ENCODE measurements at regions of chr9 and their contacts with region 1.

Region 1: DNA sequence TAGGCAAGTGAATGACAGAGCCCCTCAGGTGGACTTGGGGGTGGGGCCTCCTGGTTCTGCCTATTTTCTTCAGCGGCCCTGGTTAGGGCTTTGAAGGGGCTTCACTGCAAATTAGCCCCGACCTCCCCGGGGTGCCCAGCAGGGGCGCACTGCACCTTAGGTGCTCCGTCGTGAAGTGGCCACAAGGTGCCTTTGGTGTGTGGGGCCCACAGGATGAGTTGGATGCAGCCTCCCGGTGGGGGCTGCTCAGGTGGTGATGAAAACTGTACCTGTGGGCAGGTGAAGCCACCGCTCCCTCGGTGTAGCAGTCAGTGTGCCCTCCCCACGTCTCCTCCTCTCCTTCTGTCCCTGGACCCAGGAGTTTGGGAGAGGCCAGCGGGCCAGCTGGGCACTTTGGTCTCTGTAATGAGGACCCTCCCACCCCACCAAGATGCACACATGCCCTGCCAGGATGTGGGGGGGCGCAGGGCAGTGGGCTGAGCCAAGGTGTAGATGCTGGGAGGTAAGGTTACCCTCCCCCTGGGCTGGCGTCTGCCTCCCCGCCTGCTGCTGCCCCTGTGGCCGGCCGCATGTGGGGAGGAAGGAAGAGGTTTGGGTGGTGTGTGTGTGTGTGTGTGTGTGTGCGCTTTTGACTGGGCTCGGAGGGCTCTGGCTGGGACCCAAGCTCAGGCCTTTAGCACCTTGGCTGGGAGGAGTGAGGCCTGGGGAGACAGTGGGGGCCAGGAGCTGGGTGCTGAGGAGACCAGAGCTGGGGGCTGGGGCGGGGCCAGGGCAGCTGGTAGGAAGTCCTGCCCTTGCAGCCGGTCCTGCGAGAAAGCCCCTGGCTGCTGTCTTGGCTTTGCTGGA is 55.6 kb downstream of the RXRA start:
- DNase-seq: peak; percentile 42
- H3K4me3 ChIP-seq: no peak overlapping the region
- H3K27ac ChIP-seq: no peak overlapping the region
- H3K4me1 ChIP-seq: peaks cover 24% of the 10 kb centered on the region
- H3K27me3 ChIP-seq: no peaks in the 10 kb centered on the region
- CTCF ChIP-seq: peak; percentile 21 to 45
- POLR2A ChIP-seq: no peak

Region 2: DNA sequence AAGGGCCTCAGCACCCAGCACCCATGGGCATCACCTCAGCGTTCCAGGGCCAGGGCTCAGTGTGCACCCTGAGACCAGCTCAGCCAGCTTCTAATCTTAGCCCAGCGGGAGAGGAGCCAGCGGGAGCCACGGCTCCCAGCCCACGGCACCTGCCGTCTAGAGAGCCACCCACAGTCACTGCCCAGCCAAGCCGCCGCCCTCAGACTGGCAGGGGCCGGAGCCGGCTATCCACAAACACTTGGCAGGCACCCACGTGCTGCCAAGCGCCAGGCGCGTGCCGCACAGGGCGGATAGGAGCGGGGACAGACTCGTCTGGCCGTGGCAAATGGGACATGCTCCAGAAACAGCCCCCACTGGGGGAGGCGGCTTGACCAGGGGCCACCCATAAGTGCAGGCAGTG is 332.7 kb before region 1 on chr9:
- CTCF ChIA-PET with region 1: no interaction called
- POLR2A ChIA-PET with region 1: no interaction called
- dilution Hi-C with region 1: no loop called
- intact Hi-C with region 1: loop called (anchors 10 kb)
- DNase-seq: no peak
- H3K4me3 ChIP-seq: no peak overlapping the region
- H3K27ac ChIP-seq: no peak overlapping the region
- H3K4me1 ChIP-seq: no peaks in the 10 kb centered on the region
- H3K27me3 ChIP-seq: no peaks in the 10 kb centered on the region
- CTCF ChIP-seq: no peak
- POLR2A ChIP-seq: no peak

Region 3: GRCh38 chr9:134344068-134344799 is 37.7 kb before region 1 on chr9:
- CTCF ChIA-PET with region 1: interaction called, 3 read pairs
- POLR2A ChIA-PET with region 1: no interaction called
- dilution Hi-C with region 1: no loop called
- intact Hi-C with region 1: loop called (anchors 2 kb)
- DNase-seq: no peak
- H3K4me3 ChIP-seq: no peak overlapping the region
- H3K27ac ChIP-seq: no peak overlapping the region
- H3K4me1 ChIP-seq: peaks cover 34% of the 10 kb centered on the region
- H3K27me3 ChIP-seq: no peaks in the 10 kb centered on the region
- CTCF ChIP-seq: peak in 1 of 2 donors; percentile 14
- POLR2A ChIP-seq: no peak

Region 4: DNA sequence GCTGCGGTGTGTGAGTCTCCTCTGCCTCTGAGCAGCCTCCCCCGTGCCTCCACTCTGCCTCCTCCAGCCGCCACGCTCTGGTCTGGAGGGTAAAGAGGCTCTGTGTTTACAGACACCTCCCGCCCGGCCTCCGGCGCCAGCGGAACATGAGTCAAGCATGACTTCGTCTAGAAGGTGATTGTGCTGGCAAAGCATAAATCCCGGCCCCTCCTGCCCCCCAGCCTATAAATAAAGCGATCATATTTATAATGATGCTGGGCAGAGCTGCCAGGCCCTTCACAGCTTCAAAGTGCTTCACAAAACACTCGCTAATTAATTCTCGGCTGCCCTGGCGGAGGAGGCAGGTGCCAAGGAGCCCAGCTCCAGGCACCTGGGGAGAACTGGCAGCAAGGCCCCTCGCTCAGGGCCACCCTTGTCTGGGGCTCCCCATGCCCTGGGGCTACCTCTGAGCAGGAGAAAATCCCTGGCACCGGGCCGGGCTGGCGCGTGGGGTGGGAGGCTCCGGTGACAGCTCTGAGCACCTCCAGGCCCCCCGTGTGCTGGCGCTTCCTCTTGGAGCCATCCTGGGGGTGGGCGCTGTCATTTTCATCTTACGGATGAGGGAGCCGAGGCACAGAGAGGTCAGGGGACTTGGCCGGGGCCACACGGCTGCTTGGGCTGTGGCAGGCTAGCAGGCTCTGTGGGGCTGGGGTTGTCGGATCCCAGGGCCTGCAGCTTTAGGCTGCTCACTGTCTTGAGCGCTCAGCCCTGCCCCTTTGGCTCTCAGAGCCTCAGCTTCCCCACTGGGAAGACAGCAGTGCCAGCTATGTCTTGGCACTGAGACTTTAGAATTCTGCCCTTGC is 32.2 kb after region 1 on chr9:
- CTCF ChIA-PET with region 1: no interaction called
- POLR2A ChIA-PET with region 1: no interaction called
- dilution Hi-C with region 1: no loop called
- intact Hi-C with region 1: loop called (anchors 5 kb)
- DNase-seq: peak; percentile 94
- H3K4me3 ChIP-seq: no peak overlapping the region
- H3K27ac ChIP-seq: peak overlapping the region; percentile 66
- H3K4me1 ChIP-seq: peaks cover 26% of the 10 kb centered on the region
- H3K27me3 ChIP-seq: no peaks in the 10 kb centered on the region
- CTCF ChIP-seq: no peak
- POLR2A ChIP-seq: no peak

Region 5: DNA sequence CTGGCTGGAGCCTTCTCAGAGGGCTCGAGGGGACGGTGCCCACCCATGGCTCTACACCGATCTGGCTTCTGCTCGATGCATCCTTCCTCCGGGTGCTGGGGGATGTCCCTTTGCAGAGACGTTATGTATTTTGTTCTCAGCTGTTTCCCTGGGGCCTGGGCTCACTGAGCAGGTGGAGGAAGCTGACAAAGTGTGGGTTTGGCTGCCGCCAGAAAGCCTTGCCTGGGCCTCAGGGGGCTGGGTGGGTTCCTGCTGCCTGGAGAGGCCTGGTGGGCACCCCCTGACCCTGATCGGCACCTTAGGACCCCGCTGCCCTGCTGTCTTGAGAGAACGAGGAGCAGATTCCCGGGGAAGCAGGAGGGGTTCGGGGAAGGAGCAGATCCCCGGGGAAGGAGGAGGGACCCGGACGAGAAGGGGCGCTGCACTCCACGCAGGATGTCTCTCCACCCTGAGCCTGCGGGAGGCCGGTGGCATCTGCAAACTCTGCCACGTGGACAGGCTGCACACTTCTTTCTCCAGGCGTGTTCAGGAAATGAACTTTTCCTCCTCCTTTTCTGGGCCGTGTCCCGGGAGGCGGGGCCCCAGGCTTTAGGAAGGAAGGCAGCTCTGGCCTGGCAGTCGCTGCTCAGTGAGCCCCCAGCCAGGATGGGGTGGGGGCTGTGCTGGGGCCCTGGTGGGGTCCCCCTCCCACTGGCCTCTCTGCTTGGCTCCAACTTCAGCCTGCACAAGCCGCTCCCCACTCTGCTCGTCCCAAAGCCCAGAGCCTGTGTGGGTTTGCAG is 93.3 kb after region 1 on chr9:
- CTCF ChIA-PET with region 1: no interaction called
- POLR2A ChIA-PET with region 1: no interaction called
- dilution Hi-C with region 1: no loop called
- intact Hi-C with region 1: no loop called
- DNase-seq: peak; percentile 72
- H3K4me3 ChIP-seq: no peak overlapping the region
- H3K27ac ChIP-seq: no peak overlapping the region
- H3K4me1 ChIP-seq: peaks cover 13% of the 10 kb centered on the region
- H3K27me3 ChIP-seq: no peaks in the 10 kb centered on the region
- CTCF ChIP-seq: no peak
- POLR2A ChIP-seq: peak; percentile 62